ENCODE measurements at regions of chr2 and their contacts with region 1.

Region 1: DNA sequence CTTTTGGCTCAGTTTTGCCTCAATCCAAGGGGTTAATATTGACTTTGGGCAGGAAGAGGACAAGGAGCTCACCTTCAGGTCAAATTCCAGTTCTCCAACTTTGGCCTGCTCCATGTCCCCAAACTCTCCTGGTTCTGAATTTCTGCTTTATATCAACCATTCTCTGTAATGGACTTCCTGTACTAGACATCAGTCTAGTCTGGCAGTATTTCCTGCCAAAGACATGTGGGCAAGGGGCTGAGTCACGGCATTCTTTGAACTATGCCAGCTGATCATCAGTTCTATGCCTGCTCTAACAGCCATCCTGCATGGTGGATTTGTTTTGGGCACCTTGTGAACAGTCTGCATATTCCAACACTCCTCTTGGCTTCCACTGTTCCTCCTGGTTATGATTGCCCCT is 199.4 kb downstream of the ZEB2 start:
- DNase-seq: peak; percentile 74
- H3K4me3 Mint-ChIP-seq: peak overlapping the region; percentile 50
- H3K27ac Mint-ChIP-seq: peak overlapping the region; percentile 12
- H3K4me1 Mint-ChIP-seq: peaks cover 40% of the 10 kb centered on the region
- H3K27me3 Mint-ChIP-seq: no peaks in the 10 kb centered on the region

Region 2: DNA sequence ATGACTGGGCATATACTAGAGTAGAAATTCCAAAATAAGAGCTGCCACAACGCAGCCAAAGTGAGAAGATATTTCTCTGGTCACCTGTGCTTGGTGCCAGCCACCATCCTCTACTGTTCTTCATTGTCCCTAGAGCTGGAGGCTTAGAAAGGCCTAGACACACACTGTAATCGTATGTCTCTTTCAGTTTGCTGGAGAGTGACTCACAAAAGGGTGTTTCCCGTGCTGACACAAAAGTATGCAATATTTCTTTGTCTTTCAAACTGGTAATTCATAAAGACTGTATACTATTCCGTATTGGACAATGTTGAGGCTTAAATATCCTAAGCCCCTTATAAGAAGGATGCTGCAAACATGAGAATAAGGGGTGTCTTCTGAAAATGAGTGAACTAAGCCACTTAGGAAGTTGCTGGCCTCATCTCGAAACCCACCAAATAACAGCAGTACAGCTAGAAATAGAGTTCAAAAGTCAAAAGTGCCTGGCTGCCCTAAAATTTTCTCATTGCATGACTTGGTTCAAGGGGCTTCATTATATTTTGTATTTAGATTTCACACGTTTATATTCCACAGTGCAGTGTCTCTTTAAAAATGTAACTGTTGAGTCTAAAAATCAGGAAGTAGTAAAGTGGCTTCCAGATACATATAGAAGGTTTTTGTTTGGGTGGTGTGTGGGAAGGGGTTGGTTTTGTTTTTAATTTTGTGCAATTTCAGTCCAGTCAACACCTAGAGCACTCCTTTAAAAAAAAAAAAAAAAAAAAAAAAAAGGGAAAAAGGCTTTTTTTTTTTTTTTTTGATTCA is 590.1 kb before region 1 on chr2:
- intact Hi-C with region 1: loop called (anchors 2 kb)
- DNase-seq: peak; percentile 63
- H3K4me3 Mint-ChIP-seq: peak overlapping the region; percentile 47
- H3K27ac Mint-ChIP-seq: peak overlapping the region; percentile 92
- H3K4me1 Mint-ChIP-seq: peaks cover 31% of the 10 kb centered on the region
- H3K27me3 Mint-ChIP-seq: no peaks in the 10 kb centered on the region

Region 3: GRCh38 chr2:144230448-144231085 is 89.9 kb before region 1 on chr2:
- intact Hi-C with region 1: loop called (anchors 5 kb)
- DNase-seq: no peak
- H3K4me3 Mint-ChIP-seq: no peak overlapping the region
- H3K27ac Mint-ChIP-seq: no peak overlapping the region
- H3K4me1 Mint-ChIP-seq: peaks cover 38% of the 10 kb centered on the region
- H3K27me3 Mint-ChIP-seq: no peaks in the 10 kb centered on the region

Region 4: GRCh38 chr2:144310484-144310883 is 10.0 kb before region 1 on chr2:
- intact Hi-C with region 1: loop called (anchors 2 kb)
- DNase-seq: no peak
- H3K4me3 Mint-ChIP-seq: no peak overlapping the region
- H3K27ac Mint-ChIP-seq: no peak overlapping the region
- H3K4me1 Mint-ChIP-seq: peaks cover 16% of the 10 kb centered on the region
- H3K27me3 Mint-ChIP-seq: no peaks in the 10 kb centered on the region

Region 5: DNA sequence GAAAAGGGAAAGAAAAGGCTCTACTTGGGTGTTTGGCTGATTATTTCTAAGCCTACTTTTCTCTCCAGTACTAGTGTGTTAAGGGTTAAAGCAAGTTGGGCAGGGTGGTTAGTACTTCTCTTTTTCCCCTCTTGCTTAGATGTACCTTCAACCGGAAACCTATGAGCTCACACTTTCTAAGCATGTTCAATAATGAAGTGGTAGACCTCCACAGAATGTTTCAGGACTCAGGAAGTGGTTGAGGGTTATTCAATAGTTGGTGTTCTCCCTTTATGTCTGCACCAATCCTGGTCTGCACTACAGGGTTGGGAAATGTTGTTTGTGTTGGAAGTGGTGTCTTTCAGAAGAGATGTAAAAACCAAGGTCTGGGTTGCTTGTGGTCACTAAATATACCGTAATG is 62.4 kb after region 1 on chr2:
- intact Hi-C with region 1: loop called (anchors 2 kb)
- DNase-seq: peak; percentile 74
- H3K4me3 Mint-ChIP-seq: no peak overlapping the region
- H3K27ac Mint-ChIP-seq: peak overlapping the region; percentile 78
- H3K4me1 Mint-ChIP-seq: peaks cover 21% of the 10 kb centered on the region
- H3K27me3 Mint-ChIP-seq: peaks cover 7% of the 10 kb centered on the region

Measured in activated CD4-positive, alpha-beta T cell treated with anti-CD3 and anti-CD28 coated beads, Interleukin-2, amount 10 ng/mL, durations not matched to agents 24 days and 14 days (primary cell).